Left cardiac atrium (tissue), 4 donors: ENCODE measurements at regions of chr13 and their contacts with region 1.

Region 1: DNA sequence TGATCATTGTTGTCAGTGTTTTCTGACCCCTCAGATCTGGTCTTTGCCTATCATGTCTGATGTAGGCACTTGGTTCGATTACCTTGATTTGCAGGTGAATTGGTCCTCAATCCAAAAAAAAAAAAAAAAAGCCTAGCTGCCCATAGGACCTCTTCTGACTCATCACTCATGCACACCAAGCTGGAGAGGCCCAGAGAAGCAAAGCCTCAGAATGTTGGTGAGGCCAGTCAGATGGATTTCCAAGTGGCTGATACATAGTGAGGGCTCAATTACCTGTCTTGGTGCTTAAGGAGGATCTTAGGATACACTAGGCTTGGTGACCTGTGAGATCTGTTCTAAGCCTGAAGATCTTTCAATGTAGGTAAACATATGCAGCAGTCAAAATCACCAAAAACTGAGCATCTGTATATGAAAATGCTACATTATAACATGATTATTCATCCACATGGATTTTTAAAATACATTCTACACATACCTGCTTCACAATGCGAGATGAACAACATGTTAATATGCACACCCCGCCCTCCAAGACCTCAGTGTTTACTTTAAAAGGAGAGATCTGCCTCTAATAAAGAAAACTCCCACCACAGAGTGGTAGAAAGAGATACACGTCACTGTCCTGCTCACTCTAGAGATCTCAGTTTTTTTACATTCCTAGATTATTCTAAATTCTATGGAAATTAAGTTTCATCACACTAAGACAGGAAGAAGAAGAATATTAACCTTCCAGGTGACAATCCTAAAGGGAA is 79.9 kb upstream of the RAP2A start:
- DNase-seq: no peak
- ATAC-seq: no peak

Region 2: GRCh38 chr13:97030705-97031452 is 323.2 kb before region 1 on chr13:
- intact Hi-C with region 1: loop called in 1 of 2 experiments (anchors 5 kb)
- DNase-seq: no peak
- ATAC-seq: no peak